Left ventricle myocardium superior (tissue), 1 donor: ENCODE measurements at regions of chr1 and their contacts with region 1.

Region 1: GRCh38 chr1:234709473-234710228 is 99.7 kb upstream of the IRF2BP2 start:
- DNase-seq: peak; percentile 71
- ATAC-seq: peak; percentile 88

Region 2: DNA sequence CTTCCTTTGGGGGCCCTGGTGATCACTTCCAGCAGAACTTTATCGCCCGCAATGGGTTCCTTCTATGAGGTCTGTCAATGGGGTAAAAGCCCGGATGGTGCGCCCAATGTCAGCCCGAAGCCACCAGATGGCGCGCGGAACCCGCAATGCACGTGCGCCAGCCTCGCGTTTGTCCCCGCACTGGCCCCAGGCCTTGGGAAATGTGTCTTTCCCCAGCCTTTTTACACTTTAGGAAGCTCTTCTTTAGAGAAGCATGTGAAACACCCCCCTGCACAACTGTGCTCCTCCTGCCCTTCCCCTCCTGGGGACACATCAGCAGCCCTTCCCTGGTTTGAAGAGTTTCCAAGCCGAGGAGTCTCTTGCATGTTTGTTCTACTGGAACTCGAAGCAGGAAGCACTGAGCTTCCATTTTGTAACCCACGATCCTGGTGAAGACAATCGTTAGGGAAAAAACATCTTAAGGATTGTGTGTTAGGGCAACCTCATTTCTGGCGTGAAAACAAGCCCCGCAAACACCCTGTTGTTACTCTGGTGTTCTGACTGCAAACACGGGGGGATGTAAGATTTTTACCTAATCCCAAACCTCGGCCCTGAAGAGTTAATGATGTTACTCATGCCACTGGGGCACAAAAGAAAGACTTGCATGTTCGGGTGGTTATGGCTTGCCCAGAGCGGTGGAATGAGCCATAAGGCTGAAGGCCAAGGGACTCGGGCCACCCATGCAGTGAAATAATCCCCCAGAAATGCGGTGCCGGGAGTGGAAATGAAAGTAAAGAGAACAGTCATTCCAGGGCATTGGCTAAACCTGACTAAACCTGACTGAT is 210.3 kb before region 1 on chr1:
- intact Hi-C with region 1: loop called (anchors 10 kb)
- DNase-seq: peak; percentile 95
- ATAC-seq: peak; percentile 96

Region 3: GRCh38 chr1:234676103-234676594 is 33.5 kb before region 1 on chr1:
- intact Hi-C with region 1: no loop called
- DNase-seq: peak; percentile 87
- ATAC-seq: peak; percentile 97